Posterior cingulate gyrus (tissue), 11 donors: ENCODE measurements at regions of chr9 and their contacts with region 1.

Region 1: DNA sequence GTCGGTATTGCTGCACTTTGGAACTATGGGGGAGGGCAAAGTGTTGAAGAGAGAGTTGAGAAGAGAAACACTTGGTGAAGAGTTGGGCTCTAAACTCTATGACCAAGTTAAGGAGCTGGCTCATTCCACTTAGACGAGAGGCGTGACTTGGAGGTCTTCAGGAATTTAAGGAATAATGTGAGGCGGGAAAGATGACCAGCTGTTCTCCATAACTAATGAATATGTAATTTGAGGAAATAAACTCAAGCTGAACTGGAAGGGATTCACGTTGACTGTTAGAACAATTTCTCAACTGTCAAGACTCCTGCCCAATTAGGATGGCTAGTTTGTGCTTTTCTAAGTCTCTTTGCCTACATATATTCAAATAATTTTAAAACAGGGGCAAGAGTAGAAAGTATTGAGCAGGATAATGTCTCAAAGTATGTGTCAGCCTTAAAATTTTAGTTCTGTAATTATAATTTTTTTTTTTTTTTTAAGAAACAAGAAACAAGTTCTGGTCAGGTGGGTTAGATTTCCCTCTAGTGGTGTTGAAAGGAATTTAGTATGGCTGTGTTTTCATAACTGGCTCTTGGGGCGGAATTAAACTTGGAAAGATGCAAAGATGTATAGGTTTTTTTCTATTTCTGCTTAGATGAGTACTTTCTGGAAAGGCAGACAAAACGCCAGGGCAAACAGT is 33.4 kb downstream of the TMEM252 start:
- DNase-seq: no peak

Region 2: DNA sequence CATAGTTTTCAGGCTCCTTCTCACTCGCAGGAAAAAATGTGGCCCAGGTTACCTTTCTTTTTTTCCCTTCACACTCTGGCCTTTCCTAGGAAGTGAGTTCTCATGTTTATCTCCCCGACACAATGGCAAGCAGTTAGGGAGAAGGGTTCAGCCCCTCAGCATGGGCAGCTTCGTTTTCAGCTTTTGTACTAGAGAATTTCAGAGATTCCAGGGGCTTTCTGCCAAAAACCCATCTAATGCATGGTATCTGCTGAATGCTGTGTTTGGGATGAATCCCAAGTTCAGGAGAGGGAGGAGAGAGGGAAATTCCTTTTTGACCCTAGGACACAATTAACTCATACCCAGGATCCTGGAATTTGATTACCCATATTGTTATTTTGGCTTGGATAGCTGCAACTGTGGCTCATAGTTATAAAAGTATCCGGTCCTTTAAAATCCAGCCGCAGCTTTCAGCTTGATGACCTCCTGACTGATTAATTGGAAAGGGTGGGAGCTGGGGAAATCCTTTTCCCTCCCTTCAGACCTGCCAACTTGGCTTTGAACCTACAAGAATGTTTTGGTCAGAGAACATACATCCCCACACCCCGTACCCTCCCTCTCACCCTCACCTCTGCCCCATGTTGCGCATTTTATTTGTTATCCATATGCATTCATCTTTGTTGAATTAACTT is 45.0 kb before region 1 on chr9:
- intact Hi-C with region 1: no loop called
- DNase-seq: no peak

Region 3: GRCh38 chr9:68560071-68560844 is 53.0 kb after region 1 on chr9:
- intact Hi-C with region 1: loop called (anchors 10 kb)
- DNase-seq: peak in 1 of 10 donors; percentile 20